Left ventricle myocardium superior (tissue), 1 donor: ENCODE measurements at regions of chr18 and their contacts with region 1.

Region 1: DNA sequence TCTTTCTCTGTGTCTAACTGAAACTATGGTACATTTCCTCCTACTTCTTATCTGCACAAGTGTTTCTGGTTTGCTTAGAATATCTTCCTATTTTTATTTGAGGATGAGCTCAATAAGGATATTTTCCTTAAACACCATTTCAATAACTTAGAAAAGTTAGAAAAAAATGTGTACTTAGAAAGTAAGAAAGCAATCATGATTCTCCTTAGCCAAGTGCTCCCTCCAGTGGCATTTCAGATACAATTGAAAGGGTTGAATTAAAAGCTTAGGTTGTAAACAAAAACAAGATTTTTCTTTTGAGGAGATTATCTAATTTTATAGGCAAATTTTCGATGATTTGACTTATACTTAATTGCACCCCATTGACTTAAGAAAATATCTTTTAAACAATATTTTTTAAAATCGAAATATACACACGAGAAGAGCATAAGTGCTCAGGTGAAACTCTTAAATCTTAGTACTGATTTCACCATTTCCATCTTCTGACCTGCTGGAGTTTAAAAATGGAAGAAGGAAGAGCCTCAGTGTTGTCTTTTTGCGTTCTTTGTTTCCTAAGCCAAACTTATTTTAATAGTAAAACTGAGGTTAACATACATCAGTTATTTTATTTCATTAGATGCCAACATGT is 26.9 kb downstream of the C18orf63 start:
- DNase-seq: no peak
- ATAC-seq: no peak

Region 2: GRCh38 chr18:74097598-74098202 is 244.8 kb before region 1 on chr18:
- intact Hi-C with region 1: no loop called
- DNase-seq: no peak
- ATAC-seq: no peak

Region 3: DNA sequence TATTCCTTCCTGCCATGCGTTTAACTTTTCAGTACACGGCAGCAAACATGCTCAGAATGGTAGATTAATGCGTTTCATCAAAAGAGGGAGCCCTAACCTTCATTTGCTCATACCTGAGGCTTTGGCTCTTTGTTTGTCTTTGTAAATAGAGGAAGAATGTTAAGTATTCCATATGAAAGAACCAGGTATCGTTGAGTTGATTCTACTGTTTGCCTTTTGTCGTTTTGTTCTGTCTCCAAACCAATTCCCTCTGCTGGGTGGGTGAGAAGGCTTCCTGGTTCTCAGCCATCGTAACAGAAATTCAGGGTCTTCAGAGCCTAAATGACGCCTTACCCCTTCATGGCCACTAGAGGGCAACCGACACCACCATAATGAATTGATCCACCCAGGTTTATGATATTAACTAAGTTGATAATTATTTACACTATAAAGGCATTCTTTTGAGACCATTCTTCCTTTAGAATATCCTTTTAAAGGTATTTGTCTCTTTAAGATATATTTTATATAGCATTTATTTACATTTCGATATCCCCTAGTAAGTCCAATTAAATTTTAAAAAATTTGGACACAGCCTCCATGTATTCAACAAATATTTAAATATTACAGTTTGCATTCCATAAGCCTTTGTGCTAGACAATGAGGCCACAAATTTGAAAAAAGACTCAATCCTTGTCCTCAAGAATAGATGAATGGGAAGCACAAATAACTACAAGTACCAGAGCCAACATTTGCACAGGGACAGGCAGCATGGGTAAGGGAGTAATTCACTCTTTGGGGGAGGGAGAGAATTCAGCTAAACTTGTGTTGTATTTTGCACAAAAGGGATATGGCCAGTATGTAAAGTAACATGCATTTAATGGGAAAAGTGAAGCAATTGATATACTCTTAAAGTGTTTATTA is 146.1 kb before region 1 on chr18:
- intact Hi-C with region 1: loop called (anchors 5 kb)
- DNase-seq: no peak
- ATAC-seq: peak; percentile 72

Region 4: GRCh38 chr18:74242438-74243096 is 100.0 kb before region 1 on chr18:
- intact Hi-C with region 1: loop called (anchors 2 kb)
- DNase-seq: no peak
- ATAC-seq: peak; percentile 91

Region 5: GRCh38 chr18:74496508-74497323 is 154.2 kb after region 1 on chr18:
- intact Hi-C with region 1: no loop called
- DNase-seq: peak; percentile 82
- ATAC-seq: peak; percentile 64